MCF 10A (cell line): ENCODE measurements at regions of chr12 and their contacts with region 1.

Region 1: DNA sequence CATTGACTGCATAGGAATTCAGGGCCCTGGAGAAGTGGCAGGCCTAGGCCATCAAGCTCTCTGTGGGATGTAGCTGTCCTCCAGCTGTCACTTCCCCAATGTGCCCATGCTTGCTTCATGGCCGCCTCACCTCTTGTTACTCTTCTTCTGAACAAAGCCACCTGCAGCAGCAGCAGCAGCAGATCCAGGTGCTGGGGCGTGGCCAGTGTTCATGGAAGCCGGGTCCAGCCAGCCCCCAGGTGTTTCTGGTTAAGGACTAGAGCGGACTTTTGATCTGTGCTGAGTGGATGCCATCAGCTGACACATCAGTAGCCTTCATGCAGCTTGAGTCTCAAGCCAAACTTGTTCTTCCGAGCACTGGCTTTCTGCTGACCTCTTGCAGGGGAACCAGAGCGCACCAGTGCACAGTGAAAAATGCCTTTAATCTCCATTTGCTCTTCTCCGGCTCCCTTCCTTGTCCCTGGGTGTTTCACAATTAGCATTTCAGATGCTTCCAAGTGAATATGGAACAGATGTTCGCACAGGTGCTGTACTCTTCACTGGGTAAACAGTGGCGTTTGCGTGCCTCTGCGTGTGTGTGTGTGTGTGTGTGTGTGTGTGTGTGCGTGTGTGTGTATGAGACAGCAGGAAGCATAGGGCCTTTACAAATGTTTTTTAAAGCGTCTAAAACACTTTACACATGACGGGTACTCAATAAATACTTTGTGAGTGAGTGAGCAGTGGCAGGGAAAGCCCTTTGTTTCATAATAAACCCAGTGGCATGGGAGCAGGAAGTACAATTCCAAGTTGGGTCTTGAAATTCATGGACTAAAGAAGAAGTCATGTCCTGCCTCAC is 20.1 kb downstream of the TPCN1 start:
- DNase-seq: peak; percentile 92
- H3K4me3 Mint-ChIP-seq: peak overlapping the region; percentile 56
- H3K27ac Mint-ChIP-seq: peak overlapping the region; percentile 95
- H3K4me1 Mint-ChIP-seq: peaks cover 59% of the 10 kb centered on the region
- H3K27me3 Mint-ChIP-seq: no peaks in the 10 kb centered on the region
- CTCF ChIP-seq: no peak

Region 2: GRCh38 chr12:113092607-113093408 is 148.6 kb before region 1 on chr12:
- CTCF ChIA-PET with region 1: no interaction called
- POLR2A ChIA-PET with region 1: no interaction called
- intact Hi-C with region 1: no loop called
- DNase-seq: peak; percentile 16
- H3K4me3 Mint-ChIP-seq: peak overlapping the region; percentile 8
- H3K27ac Mint-ChIP-seq: no peak overlapping the region
- H3K4me1 Mint-ChIP-seq: no peaks in the 10 kb centered on the region
- H3K27me3 Mint-ChIP-seq: peaks cover 17% of the 10 kb centered on the region
- CTCF ChIP-seq: no peak

Region 3: DNA sequence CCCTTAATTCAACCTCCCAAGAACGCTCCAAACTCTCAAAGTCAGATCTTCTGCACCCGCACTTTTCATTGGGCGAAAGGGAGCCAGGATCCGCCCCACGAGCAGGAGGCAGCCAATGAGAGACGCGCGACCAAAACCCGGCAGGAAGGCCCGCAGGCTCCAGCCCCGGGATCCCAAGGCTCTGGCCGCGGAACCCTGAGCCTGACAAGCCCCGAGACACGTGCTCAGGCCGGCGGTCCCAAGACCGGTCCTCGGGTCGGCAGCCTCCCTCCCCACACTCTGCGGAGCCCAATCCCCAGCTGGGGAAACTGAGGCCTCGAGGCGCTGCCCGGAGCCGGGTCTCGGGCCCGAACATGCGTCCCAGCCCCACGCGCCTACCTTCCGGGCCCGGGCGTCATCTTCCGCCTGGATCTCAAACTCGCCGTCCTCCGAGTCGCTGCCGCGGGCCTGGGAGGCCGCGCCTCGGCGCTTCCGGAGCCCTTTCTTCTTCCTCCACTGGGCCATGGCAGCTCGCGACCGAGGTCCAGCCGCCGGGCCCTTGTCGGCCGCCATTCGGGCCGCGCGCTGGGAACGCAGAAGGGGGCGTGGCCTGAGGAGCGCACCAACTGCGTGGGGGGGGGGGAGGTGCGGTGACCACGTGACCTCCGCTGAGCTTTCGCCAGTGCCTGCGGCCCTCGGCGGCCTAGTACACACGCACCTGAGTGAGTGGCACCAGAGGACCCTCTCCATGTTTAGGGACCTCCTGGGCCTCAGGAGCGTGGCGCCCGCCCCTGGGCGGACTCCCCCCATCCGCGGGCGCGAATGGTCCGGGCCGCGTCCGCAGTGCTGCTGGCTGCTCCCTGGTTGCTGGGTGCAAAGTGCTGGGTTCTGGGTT is 56.3 kb before region 1 on chr12 and contains the starts of genes DDX54 and RITA1:
- CTCF ChIA-PET with region 1: interaction called, 3 read pairs
- POLR2A ChIA-PET with region 1: interaction called, 17 read pairs
- intact Hi-C with region 1: no loop called
- DNase-seq: peak; percentile 91
- H3K4me3 Mint-ChIP-seq: peak within 1 kb of the TSS; percentile 91
- H3K27ac Mint-ChIP-seq: peak within 1 kb of the TSS; percentile 94
- H3K4me1 Mint-ChIP-seq: peaks cover 15% of the 10 kb centered on the region
- H3K27me3 Mint-ChIP-seq: no peaks in the 10 kb centered on the region
- CTCF ChIP-seq: no peak
- total RNA-seq, gene DDX54: 67.3 and 75.8 TPM in 2 replicates
- total RNA-seq, gene RITA1: 17.5 and 17.9 TPM in 2 replicates

Region 4: GRCh38 chr12:113190761-113191160 is 50.6 kb before region 1 on chr12:
- CTCF ChIA-PET with region 1: interaction called, 3 read pairs
- POLR2A ChIA-PET with region 1: interaction called, 17 read pairs
- intact Hi-C with region 1: no loop called
- DNase-seq: peak; percentile 49
- H3K4me3 Mint-ChIP-seq: no peak overlapping the region
- H3K27ac Mint-ChIP-seq: no peak overlapping the region
- H3K4me1 Mint-ChIP-seq: peaks cover 24% of the 10 kb centered on the region
- H3K27me3 Mint-ChIP-seq: no peaks in the 10 kb centered on the region
- CTCF ChIP-seq: no peak

Region 5: GRCh38 chr12:113207613-113208040 is 33.8 kb before region 1 on chr12:
- CTCF ChIA-PET with region 1: no interaction called
- POLR2A ChIA-PET with region 1: no interaction called
- intact Hi-C with region 1: no loop called
- DNase-seq: no peak
- H3K4me3 Mint-ChIP-seq: no peak overlapping the region
- H3K27ac Mint-ChIP-seq: no peak overlapping the region
- H3K4me1 Mint-ChIP-seq: no peaks in the 10 kb centered on the region
- H3K27me3 Mint-ChIP-seq: no peaks in the 10 kb centered on the region
- CTCF ChIP-seq: no peak

Region 6: DNA sequence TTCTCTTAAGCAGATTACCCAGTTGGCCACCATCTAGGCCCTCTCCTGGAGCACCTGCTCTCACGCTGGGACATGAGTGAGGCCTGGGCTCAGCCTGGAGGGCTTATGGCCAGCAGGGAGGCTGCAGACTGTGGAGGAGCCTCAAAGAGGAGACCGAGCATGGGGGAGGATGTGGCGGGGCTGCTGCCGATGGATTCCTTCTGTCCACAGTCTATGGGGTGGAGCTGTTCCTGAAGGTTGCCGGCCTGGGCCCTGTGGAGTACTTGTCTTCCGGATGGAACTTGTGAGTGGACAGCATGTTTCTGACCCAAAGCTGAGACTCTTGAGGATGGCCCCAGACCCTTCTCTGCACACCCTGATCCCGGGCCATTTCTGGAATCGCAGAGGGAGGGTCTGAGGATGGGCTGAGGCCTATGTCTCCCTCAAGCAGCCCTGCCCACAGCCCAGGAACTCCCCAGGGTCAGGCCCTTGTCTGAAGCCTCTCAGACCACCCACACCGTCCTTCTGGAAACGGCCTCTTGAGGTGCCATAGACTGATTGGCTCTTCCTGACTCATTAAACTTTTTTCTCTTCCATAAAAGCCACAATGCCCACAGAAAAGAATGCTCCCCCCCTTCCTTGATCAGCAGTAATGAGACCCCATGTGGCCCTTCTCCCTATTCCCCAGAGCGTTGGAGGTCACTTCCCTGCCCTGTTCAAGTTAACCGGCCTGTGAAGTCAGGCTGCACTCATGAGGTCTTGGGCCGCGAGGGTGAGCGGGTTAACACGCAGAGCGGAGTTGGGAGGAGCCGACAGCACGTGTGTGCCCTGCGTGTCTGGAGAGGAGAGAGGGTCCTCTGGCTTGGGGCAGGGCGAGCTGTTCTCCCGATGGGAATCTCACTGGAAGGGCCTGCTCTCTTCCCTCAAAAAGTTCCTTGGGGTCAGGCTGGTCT is 44.5 kb after region 1 on chr12:
- CTCF ChIA-PET with region 1: no interaction called
- POLR2A ChIA-PET with region 1: no interaction called
- intact Hi-C with region 1: no loop called
- DNase-seq: no peak
- H3K4me3 Mint-ChIP-seq: no peak overlapping the region
- H3K27ac Mint-ChIP-seq: no peak overlapping the region
- H3K4me1 Mint-ChIP-seq: no peaks in the 10 kb centered on the region
- H3K27me3 Mint-ChIP-seq: no peaks in the 10 kb centered on the region
- CTCF ChIP-seq: no peak